ENCODE measurements at regions of chr2 and their contacts with region 1.

Region 1: GRCh38 chr2:212346865-212347264 is 191.7 kb downstream of the ERBB4 start:
- DNase-seq: no peak
- H3K4me3 ChIP-seq: no peak overlapping the region
- H3K27ac ChIP-seq: peak overlapping the region; percentile 32 to 74
- H3K4me1 ChIP-seq: peaks cover 2 to 8% of the 10 kb centered on the region in 2 donors
- H3K27me3 ChIP-seq: no peaks in the 10 kb centered on the region
- CTCF ChIP-seq: no peak

Region 2: GRCh38 chr2:212032032-212032431 is 314.8 kb before region 1 on chr2:
- intact Hi-C with region 1: loop called (anchors 10 kb)
- DNase-seq: no peak
- H3K4me3 ChIP-seq: peak overlapping the region in 1 of 2 donors; percentile 13
- H3K27ac ChIP-seq: peak overlapping the region; percentile 69 to 77
- H3K4me1 ChIP-seq: peaks cover 0 to 18% of the 10 kb centered on the region in 2 donors
- H3K27me3 ChIP-seq: no peaks in the 10 kb centered on the region
- CTCF ChIP-seq: no peak

Region 3: GRCh38 chr2:212392043-212392442 is 45.2 kb after region 1 on chr2:
- intact Hi-C with region 1: no loop called
- DNase-seq: no peak
- H3K4me3 ChIP-seq: no peak overlapping the region
- H3K27ac ChIP-seq: no peak overlapping the region
- H3K4me1 ChIP-seq: peaks cover 0 to 15% of the 10 kb centered on the region in 2 donors
- H3K27me3 ChIP-seq: no peaks in the 10 kb centered on the region
- CTCF ChIP-seq: no peak

Region 4: DNA sequence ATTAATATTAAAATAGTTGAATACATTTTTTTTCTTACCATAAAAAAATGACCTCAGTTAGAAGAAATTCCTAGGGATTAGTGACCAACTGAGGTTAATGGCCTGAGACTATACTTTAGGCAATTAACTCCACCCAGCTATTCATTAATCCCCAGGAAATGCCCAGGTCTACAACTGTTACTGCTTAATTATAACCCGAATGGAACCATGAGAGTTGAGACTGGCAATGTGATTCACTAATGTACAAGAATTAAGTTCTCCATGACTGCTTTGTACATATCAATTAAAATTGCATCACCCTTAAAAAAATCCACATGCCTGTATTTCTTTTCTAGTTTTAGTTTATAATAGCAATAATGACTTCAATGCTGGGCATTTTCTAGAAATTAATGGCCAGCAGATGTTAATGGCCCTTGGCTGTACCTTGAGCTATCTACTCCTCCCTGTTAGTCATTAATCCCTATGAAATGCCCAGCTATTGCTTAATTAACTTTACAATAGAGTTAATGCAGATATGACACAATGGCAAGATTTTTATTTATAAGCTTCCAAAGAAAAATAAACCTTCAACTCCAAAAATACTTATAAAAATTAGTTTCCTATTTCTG is 147.7 kb after region 1 on chr2:
- intact Hi-C with region 1: no loop called
- DNase-seq: no peak
- H3K4me3 ChIP-seq: no peak overlapping the region
- H3K27ac ChIP-seq: no peak overlapping the region
- H3K4me1 ChIP-seq: no peaks in the 10 kb centered on the region
- H3K27me3 ChIP-seq: no peaks in the 10 kb centered on the region
- CTCF ChIP-seq: no peak

Region 5: DNA sequence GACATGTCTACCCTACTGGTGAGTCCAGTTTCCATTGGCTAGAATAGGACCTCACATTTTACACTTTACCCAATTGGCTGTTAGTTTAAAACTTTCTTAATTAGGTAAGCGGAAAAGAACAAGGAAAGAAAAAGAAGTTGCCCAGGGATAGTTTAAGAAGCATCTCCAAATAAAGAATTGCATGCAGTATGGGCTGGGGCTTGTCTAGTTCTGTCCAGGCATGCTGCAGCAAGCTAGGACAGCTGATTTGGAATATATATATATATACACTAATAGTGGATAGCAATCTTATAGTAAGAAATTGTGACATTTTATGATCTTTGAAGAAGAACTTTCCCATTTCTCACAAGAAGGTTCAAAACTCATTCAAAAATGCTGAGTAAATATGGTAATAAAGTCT is 281.7 kb after region 1 on chr2:
- intact Hi-C with region 1: no loop called
- DNase-seq: no peak
- H3K4me3 ChIP-seq: no peak overlapping the region
- H3K27ac ChIP-seq: no peak overlapping the region
- H3K4me1 ChIP-seq: no peaks in the 10 kb centered on the region
- H3K27me3 ChIP-seq: no peaks in the 10 kb centered on the region
- CTCF ChIP-seq: no peak

Region 6: DNA sequence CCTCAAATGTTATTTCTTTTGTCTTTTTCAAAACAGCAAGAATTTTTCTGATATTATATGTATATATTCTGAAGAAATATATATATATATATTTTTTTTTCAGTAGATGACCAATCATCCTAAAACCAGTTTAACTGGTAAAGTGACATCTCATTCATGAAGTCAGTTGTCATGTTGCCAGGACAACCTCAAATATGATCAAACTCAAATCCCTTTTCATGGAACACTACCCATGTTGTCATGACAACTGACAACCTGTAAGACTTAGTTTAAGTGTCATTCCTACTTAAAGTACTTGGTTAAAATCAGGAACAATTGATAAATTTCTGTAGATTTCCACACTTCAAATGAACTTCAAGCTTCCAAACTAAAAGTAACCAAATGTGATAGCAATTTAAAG is 293.5 kb after region 1 on chr2:
- intact Hi-C with region 1: no loop called
- DNase-seq: no peak
- H3K4me3 ChIP-seq: no peak overlapping the region
- H3K27ac ChIP-seq: no peak overlapping the region
- H3K4me1 ChIP-seq: no peaks in the 10 kb centered on the region
- H3K27me3 ChIP-seq: no peaks in the 10 kb centered on the region
- CTCF ChIP-seq: no peak